Calu3 (cell line): ENCODE measurements at regions of chrX and their contacts with region 1.

Region 1: DNA sequence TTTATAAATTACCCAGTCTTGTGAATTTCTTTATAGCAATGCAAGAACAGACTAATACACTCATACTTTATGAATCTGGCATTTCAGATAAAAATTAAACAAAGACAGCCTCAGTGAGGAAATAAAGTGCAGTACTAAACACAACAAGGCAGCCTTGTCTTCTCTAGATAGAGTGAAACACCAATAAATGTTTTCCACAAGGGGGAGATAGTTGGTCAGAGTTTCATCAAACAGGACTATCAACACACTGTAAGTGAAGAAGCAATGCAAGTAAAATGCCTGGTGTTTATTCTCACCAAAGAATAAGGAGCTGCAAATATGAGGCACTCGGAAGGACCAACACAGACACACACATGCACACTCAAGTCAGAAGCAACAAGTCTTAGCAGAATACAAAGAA is 62.8 kb downstream of the FAM9B start:
- DNase-seq: no peak
- H3K4me3 Mint-ChIP-seq: no peak overlapping the region
- H3K27ac Mint-ChIP-seq: no peak overlapping the region
- H3K4me1 Mint-ChIP-seq: peaks cover 12% of the 10 kb centered on the region
- H3K27me3 Mint-ChIP-seq: no peaks in the 10 kb centered on the region
- CTCF ChIP-seq: no peak

Region 2: GRCh38 chrX:8868906-8869305 is 102.2 kb before region 1 on chrX:
- CTCF ChIA-PET with region 1: no interaction called
- intact Hi-C with region 1: loop called (anchors 2 kb)
- DNase-seq: no peak
- H3K4me3 Mint-ChIP-seq: no peak overlapping the region
- H3K27ac Mint-ChIP-seq: peak overlapping the region; percentile 79
- H3K4me1 Mint-ChIP-seq: peaks cover 20% of the 10 kb centered on the region
- H3K27me3 Mint-ChIP-seq: no peaks in the 10 kb centered on the region
- CTCF ChIP-seq: no peak

Region 3: GRCh38 chrX:8897259-8897658 is 73.9 kb before region 1 on chrX:
- CTCF ChIA-PET with region 1: no interaction called
- intact Hi-C with region 1: no loop called
- DNase-seq: no peak
- H3K4me3 Mint-ChIP-seq: no peak overlapping the region
- H3K27ac Mint-ChIP-seq: no peak overlapping the region
- H3K4me1 Mint-ChIP-seq: no peaks in the 10 kb centered on the region
- H3K27me3 Mint-ChIP-seq: no peaks in the 10 kb centered on the region
- CTCF ChIP-seq: no peak

Region 4: DNA sequence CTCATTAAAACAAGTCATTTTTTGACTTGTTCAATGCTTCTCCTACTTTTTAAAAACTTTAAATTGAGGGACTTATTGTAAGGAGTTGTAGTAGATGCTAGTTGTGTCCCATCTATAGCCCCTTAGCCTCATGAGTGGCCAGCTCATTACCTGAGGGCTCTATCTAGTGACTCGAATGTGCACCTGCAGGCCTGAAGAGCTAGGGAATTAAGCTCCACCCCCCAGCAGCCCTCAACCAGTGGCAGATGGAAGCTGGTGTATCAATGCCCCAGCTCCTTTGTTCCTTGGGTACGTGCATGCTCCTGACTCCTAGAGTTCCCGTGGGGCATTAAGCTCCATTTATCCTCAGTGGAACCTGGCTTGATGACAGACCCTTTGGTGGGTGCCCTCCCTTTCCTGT is 209.5 kb after region 1 on chrX:
- CTCF ChIA-PET with region 1: no interaction called
- intact Hi-C with region 1: loop called (anchors 5 kb)
- DNase-seq: peak; percentile 23
- H3K4me3 Mint-ChIP-seq: no peak overlapping the region
- H3K27ac Mint-ChIP-seq: no peak overlapping the region
- H3K4me1 Mint-ChIP-seq: no peaks in the 10 kb centered on the region
- H3K27me3 Mint-ChIP-seq: no peaks in the 10 kb centered on the region
- CTCF ChIP-seq: no peak

Region 5: GRCh38 chrX:9352694-9353411 is 381.7 kb after region 1 on chrX:
- CTCF ChIA-PET with region 1: no interaction called
- intact Hi-C with region 1: loop called (anchors 1 kb)
- DNase-seq: no peak
- H3K4me3 Mint-ChIP-seq: peak overlapping the region; percentile 15
- H3K27ac Mint-ChIP-seq: peak overlapping the region; percentile 93
- H3K4me1 Mint-ChIP-seq: peaks cover 29% of the 10 kb centered on the region
- H3K27me3 Mint-ChIP-seq: no peaks in the 10 kb centered on the region
- CTCF ChIP-seq: no peak

Region 6: GRCh38 chrX:9708904-9709553 is 737.9 kb after region 1 on chrX:
- CTCF ChIA-PET with region 1: no interaction called
- intact Hi-C with region 1: loop called (anchors 1 kb)
- DNase-seq: peak; percentile 74
- H3K4me3 Mint-ChIP-seq: peak overlapping the region; percentile 32
- H3K27ac Mint-ChIP-seq: peak overlapping the region; percentile 83
- H3K4me1 Mint-ChIP-seq: peaks cover 14% of the 10 kb centered on the region
- H3K27me3 Mint-ChIP-seq: no peaks in the 10 kb centered on the region
- CTCF ChIP-seq: peak; percentile 78